ENCODE measurements at regions of chr1 and their contacts with region 1.

Region 1: GRCh38 chr1:65002508-65003315 is 36.4 kb upstream of the JAK1 start:
- DNase-seq: peak; percentile 88 to 96 (median 95)
- H3K4me3 ChIP-seq: peak overlapping the region; percentile 49 to 75 (median 53)
- H3K4me3 Mint-ChIP-seq: peak overlapping the region; percentile 81 to 94
- H3K27ac ChIP-seq: peak overlapping the region; percentile 70 to 74
- H3K27ac Mint-ChIP-seq: peak overlapping the region; percentile 87 to 94 (median 92)
- H3K4me1 ChIP-seq: peaks cover 24 to 26% of the 10 kb centered on the region in 2 donors
- H3K4me1 Mint-ChIP-seq: peaks cover 27% of the 10 kb centered on the region
- H3K27me3 ChIP-seq: peaks cover 0 to 7% of the 10 kb centered on the region in 2 donors
- H3K27me3 Mint-ChIP-seq: peaks cover 4 to 22% (median 16%) of the 10 kb centered on the region in 3 donors
- CTCF ChIP-seq: no peak

Region 2: DNA sequence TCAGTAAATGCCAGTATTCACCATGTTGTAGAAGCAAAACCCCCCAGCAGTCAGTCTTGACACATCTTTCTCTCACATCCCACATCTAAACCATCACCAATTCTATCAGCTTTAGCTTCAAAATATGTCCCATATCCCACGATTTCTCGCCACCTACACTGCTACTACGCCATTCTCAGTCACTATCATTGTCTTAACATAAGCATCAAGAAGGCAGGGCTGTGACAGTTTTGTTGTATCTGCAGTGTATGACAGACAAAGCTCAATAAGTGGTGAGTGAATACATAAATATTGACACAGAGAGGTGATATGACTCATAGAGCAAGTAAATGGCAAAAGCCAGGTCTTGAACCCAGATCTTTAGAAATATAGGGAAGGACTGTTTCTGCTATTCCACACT is 96.3 kb before region 1 on chr1:
- intact Hi-C with region 1: loop called in 1 of 2 experiments (anchors 5 kb)
- DNase-seq: no peak
- H3K4me3 ChIP-seq: no peak overlapping the region
- H3K4me3 Mint-ChIP-seq: no peak overlapping the region
- H3K27ac ChIP-seq: no peak overlapping the region
- H3K27ac Mint-ChIP-seq: peak overlapping the region in 1 of 7 donors; percentile 60
- H3K4me1 ChIP-seq: peaks cover 13 to 14% of the 10 kb centered on the region in 2 donors
- H3K4me1 Mint-ChIP-seq: peaks cover 44% of the 10 kb centered on the region
- H3K27me3 ChIP-seq: no peaks in the 10 kb centered on the region
- H3K27me3 Mint-ChIP-seq: peaks cover 0 to 2% (median 1%) of the 10 kb centered on the region in 3 donors
- CTCF ChIP-seq: no peak

Region 3: DNA sequence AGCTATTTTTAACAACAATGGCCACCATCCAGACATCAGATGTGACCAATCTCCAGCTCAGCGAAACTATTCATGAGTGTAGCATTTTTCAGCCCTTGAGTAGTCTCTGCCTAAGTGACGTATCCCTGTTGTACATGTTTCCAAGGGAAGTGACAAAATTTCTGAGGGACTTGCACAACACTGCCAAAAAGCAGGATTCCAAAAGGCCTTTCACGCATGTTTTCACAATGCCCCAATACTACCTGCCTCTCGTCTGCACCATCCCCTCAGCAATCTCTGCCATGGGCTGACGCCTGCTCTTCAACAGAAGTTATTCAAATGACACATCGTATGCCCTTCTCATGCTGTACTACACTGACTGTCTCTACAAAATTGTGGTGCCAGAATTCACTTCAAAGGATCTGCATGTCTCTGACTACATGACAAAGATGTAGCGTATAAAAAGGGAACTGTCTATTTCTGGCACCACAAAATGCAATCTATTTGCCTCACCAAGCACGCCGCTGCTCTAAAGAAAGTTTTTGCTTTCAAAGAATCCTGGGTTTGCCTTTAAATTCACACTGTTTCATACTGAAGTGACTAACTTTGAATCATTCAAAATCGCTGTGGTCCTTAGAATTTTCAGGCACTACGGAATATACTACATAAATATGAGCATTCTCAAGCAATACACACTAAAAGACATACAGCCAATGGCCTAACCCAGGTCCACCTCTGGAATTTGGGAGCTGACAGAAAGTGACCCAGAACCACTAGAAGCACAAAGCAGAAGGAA is 69.2 kb before region 1 on chr1:
- intact Hi-C with region 1: loop called in 1 of 2 experiments (anchors 10 kb)
- DNase-seq: peak; percentile 89 to 97 (median 94)
- H3K4me3 ChIP-seq: peak overlapping the region in 2 of 3 experiments; percentile 8 to 48
- H3K4me3 Mint-ChIP-seq: peak overlapping the region; percentile 61 to 79
- H3K27ac ChIP-seq: peak overlapping the region; percentile 70 to 92
- H3K27ac Mint-ChIP-seq: peak overlapping the region; percentile 95 to 99 (median 98)
- H3K4me1 ChIP-seq: peaks cover 37 to 42% of the 10 kb centered on the region in 2 donors
- H3K4me1 Mint-ChIP-seq: peaks cover 54% of the 10 kb centered on the region
- H3K27me3 ChIP-seq: no peaks in the 10 kb centered on the region
- H3K27me3 Mint-ChIP-seq: peaks cover 0 to 3% (median 2%) of the 10 kb centered on the region in 3 donors
- CTCF ChIP-seq: no peak

Region 4: GRCh38 chr1:65044378-65044777 is 41.7 kb after region 1 on chr1:
- intact Hi-C with region 1: loop called in 1 of 2 experiments (anchors 5 kb)
- DNase-seq: no peak
- H3K4me3 ChIP-seq: no peak overlapping the region
- H3K4me3 Mint-ChIP-seq: no peak overlapping the region
- H3K27ac ChIP-seq: no peak overlapping the region
- H3K27ac Mint-ChIP-seq: no peak overlapping the region
- H3K4me1 ChIP-seq: peaks cover 12 to 15% of the 10 kb centered on the region in 2 donors
- H3K4me1 Mint-ChIP-seq: peaks cover 18% of the 10 kb centered on the region
- H3K27me3 ChIP-seq: no peaks in the 10 kb centered on the region
- H3K27me3 Mint-ChIP-seq: peaks cover 0 to 3% (median 0%) of the 10 kb centered on the region in 3 donors
- CTCF ChIP-seq: no peak

Measured in CD14-positive monocyte (primary cell).